Heart right ventricle (tissue), 16 donors: ENCODE measurements at regions of chr10 and their contacts with region 1.

Region 1: GRCh38 chr10:32445740-32446535 is at the start of gene CCDC7:
- DNase-seq: peak; percentile 85 to 89
- ATAC-seq: peak; percentile 98 to 99 (median 98)
- H3K4me3 ChIP-seq: peak within 1 kb of the TSS; percentile 56 to 85 (median 74)
- H3K27ac ChIP-seq: peak within 1 kb of the TSS; percentile 95 to 99 (median 98)
- H3K4me1 ChIP-seq: peaks cover 0 to 19% (median 9%) of the 10 kb centered on the region in 9 donors
- H3K27me3 ChIP-seq: no peaks in the 10 kb centered on the region
- CTCF ChIP-seq: peak; percentile 33 to 84 (median 55)
- total RNA-seq, gene CCDC7: 17.8 to 34.1 (median 21.0) TPM

Region 2: GRCh38 chr10:32378363-32379317 is 67.3 kb before region 1 on chr10:
- intact Hi-C with region 1: loop called in 8 of 10 experiments (anchors 2 to 5 kb)
- DNase-seq: peak; percentile 93 to 96
- ATAC-seq: peak; percentile 99 to 100 (median 99)
- H3K4me3 ChIP-seq: peak overlapping the region; percentile 46 to 91 (median 72)
- H3K27ac ChIP-seq: peak overlapping the region; percentile 60 to 92 (median 87)
- H3K4me1 ChIP-seq: peaks cover 0 to 33% (median 19%) of the 10 kb centered on the region in 9 donors
- H3K27me3 ChIP-seq: no peaks in the 10 kb centered on the region
- CTCF ChIP-seq: no peak

Region 3: GRCh38 chr10:32393911-32394310 is 52.0 kb before region 1 on chr10:
- intact Hi-C with region 1: loop called in 1 of 10 experiments (anchors 10 kb)
- DNase-seq: no peak
- ATAC-seq: no peak
- H3K4me3 ChIP-seq: no peak overlapping the region
- H3K27ac ChIP-seq: no peak overlapping the region
- H3K4me1 ChIP-seq: no peaks in the 10 kb centered on the region
- H3K27me3 ChIP-seq: no peaks in the 10 kb centered on the region
- CTCF ChIP-seq: no peak